ENCODE measurements at regions of chr22 and their contacts with region 1.

Region 1: DNA sequence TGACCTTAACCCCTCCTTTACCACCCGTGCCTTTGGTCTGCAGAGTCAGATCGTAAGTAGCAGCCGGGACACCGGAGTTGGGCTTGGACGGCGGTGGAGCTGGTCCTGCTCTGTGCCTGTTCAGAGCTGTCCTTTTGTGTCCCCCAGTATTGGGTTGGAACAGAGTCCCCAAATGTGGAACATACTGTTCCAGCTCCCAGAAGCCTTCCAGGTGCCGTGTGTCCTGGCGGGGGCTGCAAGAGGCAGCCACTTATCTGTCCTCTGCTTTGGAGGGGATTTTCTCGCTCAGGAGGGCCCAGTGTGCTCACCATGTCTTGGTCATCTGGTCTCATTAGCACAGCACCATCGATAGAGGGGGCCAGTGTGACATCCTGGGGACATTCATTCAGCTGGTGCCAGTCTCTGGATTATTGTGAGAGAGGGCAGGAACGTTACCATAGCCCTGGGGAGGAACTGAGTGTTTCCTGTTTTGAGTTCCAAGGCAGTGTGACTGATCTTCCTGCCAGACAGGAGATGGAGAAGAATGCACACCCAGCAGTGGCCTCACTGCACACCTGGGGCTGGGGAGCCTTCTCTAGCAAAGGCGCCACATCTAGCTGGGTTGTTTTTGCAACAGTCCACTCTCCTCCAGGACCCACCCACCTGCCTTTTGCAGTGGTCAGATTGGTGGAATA is 12.4 kb downstream of the CRELD2 start:
- H3K4me3 Mint-ChIP-seq: no peak overlapping the region
- H3K27ac Mint-ChIP-seq: peak overlapping the region; percentile 80
- H3K4me1 Mint-ChIP-seq: peaks cover 41% of the 10 kb centered on the region
- H3K27me3 Mint-ChIP-seq: peaks cover 19% of the 10 kb centered on the region

Region 2: GRCh38 chr22:49753961-49754695 is 176.7 kb before region 1 on chr22:
- intact Hi-C with region 1: no loop called
- H3K4me3 Mint-ChIP-seq: no peak overlapping the region
- H3K27ac Mint-ChIP-seq: no peak overlapping the region
- H3K4me1 Mint-ChIP-seq: peaks cover 5% of the 10 kb centered on the region
- H3K27me3 Mint-ChIP-seq: peaks cover 3% of the 10 kb centered on the region

Region 3: DNA sequence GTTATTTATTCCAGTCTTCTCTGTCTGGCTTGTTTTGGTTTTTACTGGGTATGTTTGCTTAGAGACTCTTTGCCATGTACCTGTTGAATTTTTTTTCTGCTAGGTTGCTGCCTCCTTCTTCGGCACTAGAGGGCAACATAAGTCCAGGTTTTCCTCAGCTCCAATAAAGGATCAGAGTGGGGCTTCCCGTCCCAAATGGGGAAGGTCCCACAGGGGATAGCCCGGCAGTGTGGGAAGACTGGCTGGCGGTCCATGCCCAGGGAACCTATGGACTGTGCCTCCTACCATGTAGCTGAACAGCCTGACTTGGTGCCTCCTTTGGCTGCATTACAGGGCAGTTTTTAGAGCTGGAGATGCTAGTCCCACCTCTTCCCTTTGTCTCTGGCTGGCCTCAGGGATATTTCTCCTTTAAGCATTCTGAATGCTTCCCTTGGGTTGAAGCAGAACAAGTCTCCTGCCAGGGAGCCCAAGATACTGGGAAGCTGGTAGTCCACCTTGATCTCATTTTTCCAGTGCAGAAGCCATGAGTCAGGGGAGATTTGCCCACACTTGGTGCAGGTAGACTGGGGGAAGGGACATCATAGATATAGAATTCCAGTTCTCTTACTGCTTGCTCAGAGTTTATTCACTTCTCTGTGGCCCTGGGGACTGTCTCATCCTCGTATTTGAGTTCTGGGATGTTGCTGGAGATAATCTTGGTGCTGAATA is 163.4 kb before region 1 on chr22:
- intact Hi-C with region 1: loop called (anchors 5 kb)
- H3K4me3 Mint-ChIP-seq: no peak overlapping the region
- H3K27ac Mint-ChIP-seq: no peak overlapping the region
- H3K4me1 Mint-ChIP-seq: no peaks in the 10 kb centered on the region
- H3K27me3 Mint-ChIP-seq: peaks cover 12% of the 10 kb centered on the region

Region 4: GRCh38 chr22:49960159-49961004 is 29.5 kb after region 1 on chr22 and contains the start of gene PIM3:
- intact Hi-C with region 1: loop called (anchors 1 kb)
- H3K4me3 Mint-ChIP-seq: peak within 1 kb of the TSS; percentile 99
- H3K27ac Mint-ChIP-seq: peak within 1 kb of the TSS; percentile 97
- H3K4me1 Mint-ChIP-seq: peaks cover 67% of the 10 kb centered on the region
- H3K27me3 Mint-ChIP-seq: no peaks in the 10 kb centered on the region

Region 5: DNA sequence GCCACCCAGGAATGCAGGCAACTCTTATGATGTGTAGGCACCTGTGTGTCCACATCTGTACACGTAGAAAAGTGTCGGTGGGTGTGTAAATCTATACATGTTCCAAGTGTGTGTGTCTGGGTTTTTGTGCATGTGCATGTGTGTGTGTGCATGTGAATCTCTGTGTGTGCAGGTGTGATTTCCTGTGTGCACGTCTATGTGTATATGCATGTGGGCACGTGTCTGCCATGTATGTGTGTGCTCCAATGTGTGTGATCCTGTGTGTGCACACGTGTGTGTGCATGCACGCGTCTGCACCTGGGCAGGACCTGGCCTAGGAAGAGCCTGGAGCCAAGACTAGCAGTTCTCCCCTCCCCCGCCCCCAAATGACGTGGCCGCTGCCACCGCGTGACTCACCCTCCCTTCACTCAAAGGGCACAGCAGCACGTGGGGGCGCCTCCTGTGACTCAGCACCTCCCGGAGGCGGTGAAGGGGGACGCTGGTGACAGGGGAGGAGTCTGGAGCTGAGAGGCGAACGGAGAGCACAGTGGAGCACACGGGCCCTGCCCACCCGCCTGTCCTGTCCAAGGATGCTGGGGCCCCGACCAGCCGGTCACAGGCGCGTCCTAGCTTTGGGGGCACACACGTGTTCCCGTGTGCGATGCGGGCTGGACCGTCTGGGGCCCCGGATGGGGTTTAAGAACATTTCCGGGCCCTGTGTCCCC is 39.8 kb after region 1 on chr22:
- intact Hi-C with region 1: loop called (anchors 5 kb)
- H3K4me3 Mint-ChIP-seq: peak overlapping the region; percentile 73
- H3K27ac Mint-ChIP-seq: peak overlapping the region; percentile 91
- H3K4me1 Mint-ChIP-seq: peaks cover 59% of the 10 kb centered on the region
- H3K27me3 Mint-ChIP-seq: peaks cover 4% of the 10 kb centered on the region

Region 6: DNA sequence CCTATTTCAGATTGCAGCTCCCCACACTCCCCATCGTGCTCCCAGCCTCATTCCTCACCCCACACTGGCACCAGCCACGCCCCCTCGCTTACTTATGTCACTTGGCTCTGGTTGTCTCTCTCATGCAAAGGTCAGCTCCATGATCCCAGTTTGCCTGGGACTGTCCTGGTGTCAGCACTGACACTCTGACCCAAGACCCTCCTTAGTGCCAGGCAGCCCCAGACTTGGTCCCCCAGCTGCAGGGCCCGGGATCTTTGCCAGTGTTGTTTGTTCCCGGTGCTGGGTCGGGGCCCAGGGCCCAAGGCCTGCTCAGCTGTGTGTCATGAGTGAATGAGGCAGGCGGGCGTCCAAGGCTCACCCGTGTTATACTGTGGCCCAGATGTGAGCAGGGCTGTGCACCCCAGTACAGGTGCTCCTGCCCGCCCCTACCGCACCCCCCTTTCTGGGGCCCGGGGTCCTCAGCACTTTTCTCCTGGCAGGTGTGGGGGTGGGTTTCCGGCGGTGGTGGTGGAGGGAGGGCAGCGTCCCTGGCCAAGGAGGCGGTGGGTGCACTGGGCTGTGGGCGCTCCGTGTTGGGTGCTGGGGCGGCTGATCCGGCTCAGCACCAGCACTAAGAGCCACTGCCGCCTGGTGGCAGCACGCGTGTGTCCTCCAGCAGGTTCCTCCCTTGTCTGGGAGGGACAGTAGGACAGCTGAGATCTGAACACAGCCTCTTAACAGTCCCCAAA is 62.2 kb after region 1 on chr22:
- intact Hi-C with region 1: loop called (anchors 1 kb)
- H3K4me3 Mint-ChIP-seq: no peak overlapping the region
- H3K27ac Mint-ChIP-seq: no peak overlapping the region
- H3K4me1 Mint-ChIP-seq: peaks cover 24% of the 10 kb centered on the region
- H3K27me3 Mint-ChIP-seq: peaks cover 27% of the 10 kb centered on the region

Region 7: GRCh38 chr22:50030297-50031188 is 99.7 kb after region 1 on chr22:
- intact Hi-C with region 1: loop called (anchors 1 kb)
- H3K4me3 Mint-ChIP-seq: no peak overlapping the region
- H3K27ac Mint-ChIP-seq: no peak overlapping the region
- H3K4me1 Mint-ChIP-seq: peaks cover 6% of the 10 kb centered on the region
- H3K27me3 Mint-ChIP-seq: peaks cover 49% of the 10 kb centered on the region